Sigmoid colon (tissue), 7 donors: ENCODE measurements at regions of chr18 and their contacts with region 1.

Region 1: GRCh38 chr18:62522504-62523254 is at the start of gene ZCCHC2:
- DNase-seq: peak; percentile 99
- H3K4me3 ChIP-seq: peak within 1 kb of the TSS; percentile 80 to 96 (median 83)
- H3K27ac ChIP-seq: peak within 1 kb of the TSS; percentile 93 to 99 (median 98)
- H3K4me1 ChIP-seq: peaks cover 0 to 29% (median 19%) of the 10 kb centered on the region in 4 donors
- H3K27me3 ChIP-seq: no peaks in the 10 kb centered on the region
- CTCF ChIP-seq: no peak
- EP300 ChIP-seq: peak in 2 of 4 donors; percentile 3 to 57
- POLR2A ChIP-seq: peak; percentile 37 to 63
- total RNA-seq, gene ZCCHC2: 14.4 to 23.5 (median 16.8) TPM

Region 2: DNA sequence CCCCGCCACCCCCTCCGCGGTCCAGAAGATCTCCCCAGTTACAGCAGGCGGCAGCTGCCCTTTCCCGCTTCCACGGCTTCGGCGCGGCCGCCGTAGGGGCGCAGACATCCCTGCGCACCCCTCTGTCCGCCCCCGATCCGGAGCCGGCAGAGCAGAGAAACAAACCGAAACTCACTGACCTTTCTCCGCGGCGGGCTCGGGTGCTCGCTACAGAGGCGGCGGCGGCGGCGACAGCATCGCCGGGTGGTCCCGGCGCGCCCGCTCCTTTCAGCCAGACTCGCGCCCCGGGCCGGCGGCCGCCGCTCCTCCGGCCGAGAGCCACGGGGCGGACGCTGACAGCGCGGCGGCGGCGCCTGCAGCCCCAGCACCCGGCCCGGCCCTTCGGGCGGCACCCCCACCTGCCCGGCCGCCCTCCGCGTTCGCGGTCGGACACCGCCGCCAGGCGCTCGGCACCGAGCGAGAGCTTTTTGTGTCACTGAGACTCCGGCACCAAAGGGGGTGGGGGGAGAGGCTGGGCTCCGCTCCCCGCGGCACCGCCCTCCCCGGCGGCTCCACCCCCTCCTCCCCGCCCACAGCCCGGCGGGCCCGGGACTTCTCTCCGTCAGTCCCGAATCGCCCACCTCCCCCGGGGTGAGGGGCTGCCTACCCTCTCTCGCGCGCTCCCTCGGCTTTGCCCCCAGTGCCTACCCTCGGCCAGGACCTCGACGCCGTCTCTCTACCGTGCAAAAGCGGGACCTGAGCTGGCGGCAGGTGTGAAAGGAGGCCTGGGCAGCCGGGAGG is 628.5 kb before region 1 on chr18:
- intact Hi-C with region 1: loop called (anchors 10 kb)
- DNase-seq: peak; percentile 86
- H3K4me3 ChIP-seq: peak overlapping the region; percentile 69 to 97 (median 79)
- H3K27ac ChIP-seq: peak overlapping the region; percentile 59 to 82 (median 72)
- H3K4me1 ChIP-seq: peaks cover 0 to 42% (median 33%) of the 10 kb centered on the region in 4 donors
- H3K27me3 ChIP-seq: no peaks in the 10 kb centered on the region
- CTCF ChIP-seq: no peak
- EP300 ChIP-seq: no peak
- POLR2A ChIP-seq: peak in 1 of 2 donors; percentile 14

Region 3: DNA sequence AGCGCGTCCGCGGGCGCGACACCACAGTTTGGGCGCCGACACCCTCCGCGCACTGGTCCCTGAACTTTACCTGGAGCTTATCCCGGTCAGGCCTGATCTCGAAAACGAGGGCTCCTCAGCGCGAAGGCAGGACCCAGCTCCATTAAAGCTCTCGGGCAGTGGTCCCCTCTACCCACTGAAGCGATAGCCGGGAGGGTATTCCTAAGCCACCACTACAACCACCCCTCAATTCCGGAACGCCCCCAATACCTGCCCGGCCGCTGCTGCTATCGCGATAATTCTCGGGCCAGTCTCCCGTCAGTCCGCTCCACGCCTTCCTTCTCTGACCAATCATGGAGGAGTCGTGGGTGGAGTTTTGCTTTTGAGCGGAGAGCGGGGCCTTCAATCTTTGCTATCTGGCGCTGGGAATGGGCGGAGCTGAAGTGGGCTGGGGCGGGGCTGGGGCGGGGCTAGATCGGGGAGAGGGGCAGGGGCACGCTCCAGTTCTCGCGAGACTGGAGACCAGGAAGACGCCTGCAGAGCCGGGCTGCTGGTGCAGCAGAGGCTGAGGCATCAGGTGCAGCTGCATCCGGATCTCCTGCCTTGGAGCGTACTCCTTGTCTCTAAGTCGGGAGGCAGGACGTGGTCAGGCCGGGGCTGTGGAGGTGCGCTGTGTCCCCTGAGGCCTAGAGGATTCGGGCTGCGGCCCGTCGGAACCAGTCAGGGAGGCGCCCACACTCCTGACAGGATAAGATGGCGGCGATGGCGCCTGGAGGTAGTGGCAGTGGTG is 335.7 kb before region 1 on chr18 and contains the starts of genes PIGN and RELCH:
- intact Hi-C with region 1: loop called (anchors 2 kb)
- DNase-seq: peak; percentile 98
- H3K4me3 ChIP-seq: peak within 1 kb of the TSS; percentile 85 to 97 (median 91)
- H3K27ac ChIP-seq: peak within 1 kb of the TSS; percentile 79 to 90 (median 85)
- H3K4me1 ChIP-seq: peaks cover 0 to 41% (median 30%) of the 10 kb centered on the region in 4 donors
- H3K27me3 ChIP-seq: no peaks in the 10 kb centered on the region
- CTCF ChIP-seq: no peak
- EP300 ChIP-seq: no peak
- POLR2A ChIP-seq: peak; percentile 77 to 88
- total RNA-seq, gene PIGN: 18.4 to 23.2 (median 19.8) TPM
- total RNA-seq, gene RELCH: 19.3 to 28.8 (median 25.3) TPM

Region 4: DNA sequence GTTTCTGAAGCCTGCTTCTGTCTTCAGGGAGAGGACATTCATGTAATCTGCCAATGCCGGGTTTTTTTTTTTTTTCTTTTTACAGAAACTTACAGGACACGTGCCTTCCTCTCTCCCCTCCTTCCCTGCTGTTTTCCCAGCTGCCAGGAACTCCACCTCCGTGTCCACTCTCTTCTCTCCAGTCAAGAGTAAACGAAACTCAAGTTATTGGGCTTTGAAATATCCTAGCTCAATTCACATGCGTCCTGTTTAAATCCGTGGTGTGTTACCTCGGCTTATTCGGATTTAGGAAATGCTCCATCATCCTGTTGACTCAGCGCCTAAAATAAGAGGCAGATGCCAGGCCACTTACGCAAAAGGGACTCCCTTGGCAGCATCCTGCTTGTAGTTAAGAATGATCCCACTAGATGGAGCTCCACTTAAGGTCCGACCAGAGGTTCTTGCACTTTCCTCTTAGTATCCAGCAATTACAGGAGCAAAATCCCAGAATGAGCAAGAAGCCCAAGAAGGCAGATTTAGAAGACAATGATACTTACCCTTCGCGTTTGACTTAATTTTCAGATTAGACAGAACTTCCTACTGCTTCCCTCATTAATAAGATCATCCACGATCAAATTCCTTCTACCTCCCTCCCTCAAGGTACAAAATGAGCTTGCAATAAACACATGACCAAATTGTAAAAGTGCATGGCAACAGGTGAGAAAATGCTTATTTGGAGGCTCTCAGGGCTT is 97.0 kb before region 1 on chr18:
- intact Hi-C with region 1: loop called (anchors 1 kb)
- DNase-seq: peak; percentile 94
- H3K4me3 ChIP-seq: peak overlapping the region; percentile 4 to 47 (median 38)
- H3K27ac ChIP-seq: peak overlapping the region; percentile 79 to 85 (median 83)
- H3K4me1 ChIP-seq: peaks cover 0 to 13% (median 12%) of the 10 kb centered on the region in 4 donors
- H3K27me3 ChIP-seq: no peaks in the 10 kb centered on the region
- CTCF ChIP-seq: peak; percentile 58 to 80 (median 77)
- EP300 ChIP-seq: no peak
- POLR2A ChIP-seq: no peak

Region 5: GRCh38 chr18:62584241-62585120 is 61.8 kb after region 1 on chr18:
- intact Hi-C with region 1: loop called (anchors 5 kb)
- DNase-seq: peak; percentile 94
- H3K4me3 ChIP-seq: peak overlapping the region in 3 of 4 donors; percentile 15 to 24 (median 16)
- H3K27ac ChIP-seq: peak overlapping the region; percentile 10 to 66 (median 42)
- H3K4me1 ChIP-seq: peaks cover 0 to 21% (median 12%) of the 10 kb centered on the region in 4 donors
- H3K27me3 ChIP-seq: no peaks in the 10 kb centered on the region
- CTCF ChIP-seq: peak; percentile 98 to 99 (median 98)
- EP300 ChIP-seq: no peak
- POLR2A ChIP-seq: no peak

Region 6: DNA sequence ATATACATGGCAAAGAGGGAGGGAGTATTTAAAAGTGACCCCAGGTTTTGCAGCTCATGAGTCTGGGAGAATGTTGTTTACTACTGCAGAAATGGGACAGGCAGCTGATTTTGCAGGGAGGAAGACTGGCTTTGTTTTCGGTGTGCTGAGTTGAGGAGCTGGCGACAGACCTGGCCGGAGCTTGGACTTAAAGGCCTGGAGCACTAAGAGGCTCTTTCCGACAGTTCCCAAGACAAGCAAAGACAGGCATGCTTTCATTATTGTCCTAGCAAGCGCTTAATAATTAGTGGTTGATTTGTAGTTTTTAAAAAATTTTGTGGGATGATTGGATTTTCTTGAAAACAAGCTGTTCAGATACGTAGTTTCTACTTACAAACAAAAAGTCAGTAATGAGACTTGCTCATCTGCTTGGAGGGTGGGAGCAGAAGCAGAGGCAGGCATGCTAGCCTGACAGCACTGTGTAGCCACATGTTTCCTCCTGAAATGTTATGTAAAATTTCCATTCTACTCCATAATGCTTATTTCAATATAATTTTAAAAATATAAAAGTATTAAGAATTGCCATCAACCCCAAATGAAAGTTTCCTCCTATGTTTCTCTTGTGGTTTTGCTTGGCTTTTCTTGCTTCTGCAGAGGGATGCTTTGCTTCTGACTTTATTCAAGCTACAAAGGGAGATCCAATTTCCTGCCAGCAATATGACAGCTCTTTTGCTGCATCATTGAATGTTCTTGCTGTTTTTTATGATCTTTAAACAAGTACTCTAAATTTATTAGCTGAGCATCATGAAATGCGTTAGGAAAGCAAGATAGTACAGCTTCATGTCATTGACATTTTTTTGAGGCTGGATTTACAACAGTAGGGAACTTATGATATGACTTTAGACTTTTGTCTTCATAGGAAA is 268.4 kb after region 1 on chr18:
- intact Hi-C with region 1: loop called (anchors 10 kb)
- DNase-seq: no peak
- H3K4me3 ChIP-seq: no peak overlapping the region
- H3K27ac ChIP-seq: peak overlapping the region in 3 of 4 donors; percentile 20 to 62 (median 44)
- H3K4me1 ChIP-seq: peaks cover 0 to 65% (median 52%) of the 10 kb centered on the region in 4 donors
- H3K27me3 ChIP-seq: no peaks in the 10 kb centered on the region
- CTCF ChIP-seq: no peak
- EP300 ChIP-seq: no peak
- POLR2A ChIP-seq: no peak

Region 7: GRCh38 chr18:63909870-63910269 is 1387.2 kb after region 1 on chr18:
- intact Hi-C with region 1: no loop called
- DNase-seq: no peak
- H3K4me3 ChIP-seq: no peak overlapping the region
- H3K27ac ChIP-seq: no peak overlapping the region
- H3K4me1 ChIP-seq: no peaks in the 10 kb centered on the region
- H3K27me3 ChIP-seq: no peaks in the 10 kb centered on the region
- CTCF ChIP-seq: no peak
- EP300 ChIP-seq: no peak
- POLR2A ChIP-seq: no peak